PC-9 (cell line): ENCODE measurements at regions of chr11 and their contacts with region 1.

Region 1: DNA sequence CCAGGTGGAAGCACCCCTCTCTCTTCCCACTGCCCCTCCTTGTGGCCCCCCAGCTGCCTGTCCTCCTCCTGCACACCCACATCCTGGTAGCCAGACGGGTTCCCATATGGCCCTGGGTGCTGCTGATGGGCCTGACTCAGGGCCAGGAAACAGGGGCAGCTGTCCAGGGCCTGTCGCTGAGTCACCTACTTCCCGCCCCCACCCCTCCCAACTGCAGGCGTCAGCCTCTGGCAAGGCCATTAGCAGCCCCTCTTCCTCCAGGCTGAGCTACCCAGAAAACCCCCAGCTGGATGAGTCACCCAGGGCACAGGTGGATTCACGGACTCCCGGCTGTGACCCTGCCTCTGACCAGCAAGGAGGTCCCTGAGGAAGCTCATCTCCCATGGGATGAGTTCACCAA is 6.9 kb upstream of the GAL start:
- DNase-seq: peak; percentile 85 to 90
- H3K4me3 ChIP-seq: no peak overlapping the region
- H3K27ac ChIP-seq: no peak overlapping the region
- H3K4me1 ChIP-seq: peaks cover 20% of the 10 kb centered on the region
- H3K27me3 ChIP-seq: no peaks in the 10 kb centered on the region
- CTCF ChIP-seq: no peak

Region 2: DNA sequence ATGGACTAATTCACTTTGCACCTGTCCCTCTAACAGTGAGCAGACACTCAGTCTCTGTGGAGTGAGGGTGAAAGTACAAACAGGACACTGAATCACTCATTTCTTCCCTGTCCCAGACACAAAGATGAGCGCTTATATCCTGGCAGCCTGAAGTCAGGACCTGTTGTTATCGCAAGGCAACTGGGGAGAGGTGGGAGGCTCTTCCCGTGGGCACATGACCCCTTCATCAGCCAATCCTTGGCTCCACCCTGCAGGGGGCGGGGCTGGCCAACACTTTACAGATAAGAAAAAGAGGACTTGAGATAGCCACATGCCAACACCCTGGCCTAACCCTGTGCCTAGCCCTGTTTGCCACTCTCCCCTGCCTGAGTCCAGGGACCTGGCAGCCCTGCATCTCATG is 103.4 kb after region 1 on chr11:
- CTCF ChIA-PET with region 1: no interaction called
- POLR2A ChIA-PET with region 1: no interaction called
- intact Hi-C with region 1: no loop called
- DNase-seq: peak in 1 of 2 experiments; percentile 11
- H3K4me3 ChIP-seq: no peak overlapping the region
- H3K27ac ChIP-seq: no peak overlapping the region
- H3K4me1 ChIP-seq: peaks cover 19% of the 10 kb centered on the region
- H3K27me3 ChIP-seq: no peaks in the 10 kb centered on the region
- CTCF ChIP-seq: no peak

Region 3: GRCh38 chr11:68958211-68958610 is 280.8 kb after region 1 on chr11:
- CTCF ChIA-PET with region 1: interaction called, 17 read pairs
- POLR2A ChIA-PET with region 1: no interaction called
- intact Hi-C with region 1: no loop called
- DNase-seq: no peak
- H3K4me3 ChIP-seq: no peak overlapping the region
- H3K27ac ChIP-seq: no peak overlapping the region
- H3K4me1 ChIP-seq: no peaks in the 10 kb centered on the region
- H3K27me3 ChIP-seq: peaks cover 5% of the 10 kb centered on the region; the same call in 1 of the 2 replicates
- CTCF ChIP-seq: no peak

Region 4: DNA sequence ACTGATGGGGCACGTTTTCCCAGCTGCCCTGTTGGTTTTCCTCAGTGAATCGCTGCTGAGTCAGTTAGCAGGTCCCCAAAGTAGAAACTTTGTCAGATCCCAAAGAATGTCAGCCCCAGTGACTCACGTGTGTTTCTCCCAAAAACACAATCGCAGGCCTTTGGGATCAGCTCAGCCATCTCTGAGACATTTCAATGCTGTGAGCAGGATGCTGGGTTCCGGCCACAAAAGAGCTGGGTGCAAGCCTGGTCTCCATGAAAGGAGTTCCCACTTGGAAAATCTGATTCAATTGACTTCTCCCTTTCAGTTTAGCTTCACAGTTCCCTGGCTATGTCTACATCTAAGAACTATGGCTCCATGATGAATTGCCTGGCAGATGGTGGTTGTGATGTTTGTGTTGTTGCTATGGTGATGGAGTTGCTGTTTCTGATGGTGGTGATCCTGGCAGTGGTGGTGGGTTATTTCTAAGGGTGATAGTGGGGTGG is 644.5 kb after region 1 on chr11:
- CTCF ChIA-PET with region 1: no interaction called
- POLR2A ChIA-PET with region 1: no interaction called
- intact Hi-C with region 1: no loop called
- DNase-seq: peak; percentile 46 to 63
- H3K4me3 ChIP-seq: peak overlapping the region; percentile 45; the same call in 1 of the 2 replicates
- H3K27ac ChIP-seq: peak overlapping the region; percentile 93
- H3K4me1 ChIP-seq: peaks cover 64% of the 10 kb centered on the region
- H3K27me3 ChIP-seq: no peaks in the 10 kb centered on the region
- CTCF ChIP-seq: no peak